Mucosa of descending colon (tissue), 3 donors: ENCODE measurements at regions of chr7 and their contacts with region 1.

Region 1: DNA sequence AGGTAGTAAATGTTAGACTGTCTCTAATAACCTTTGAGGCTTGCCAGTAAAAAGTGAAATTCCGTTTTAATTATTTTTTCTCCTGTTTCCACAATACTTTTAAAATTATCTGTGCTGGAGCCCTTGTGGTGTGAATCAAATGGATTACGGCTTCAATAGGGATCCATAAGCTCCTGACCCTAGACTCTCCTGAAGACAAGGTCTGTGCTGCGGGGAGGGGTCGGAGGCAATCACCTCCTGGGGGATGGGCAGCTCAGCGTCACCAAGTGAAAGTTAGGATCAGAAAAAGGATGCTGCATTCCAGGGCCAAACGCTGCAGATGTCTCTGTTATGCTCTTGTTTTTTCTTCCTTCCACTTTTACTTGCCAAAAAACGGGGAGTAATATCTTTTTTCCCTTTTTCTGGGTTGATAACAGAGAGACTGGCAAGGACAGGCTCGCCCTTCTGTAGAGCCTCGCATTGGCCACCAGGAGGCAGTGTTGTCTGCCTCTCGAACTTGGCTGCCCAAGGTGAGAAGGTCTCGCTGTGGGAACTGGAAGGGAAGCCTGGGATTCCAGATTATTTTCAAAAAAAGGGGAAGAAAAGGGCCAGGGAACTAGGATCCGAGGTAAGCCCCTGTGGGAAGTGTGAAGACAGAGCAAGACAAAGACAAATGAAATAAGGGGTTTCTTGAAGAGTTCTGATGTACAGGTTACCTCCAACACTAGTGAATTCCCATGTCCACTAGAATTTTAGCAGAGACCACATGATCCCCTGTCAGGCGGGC is 621.9 kb downstream of the ACTR3B start:
- DNase-seq: peak in 2 of 3 donors; percentile 12 to 40
- ATAC-seq: peak; percentile 40
- H3K4me3 ChIP-seq: no peak overlapping the region
- H3K4me1 ChIP-seq: no peaks in the 10 kb centered on the region
- CTCF ChIP-seq: peak; percentile 49

Region 2: DNA sequence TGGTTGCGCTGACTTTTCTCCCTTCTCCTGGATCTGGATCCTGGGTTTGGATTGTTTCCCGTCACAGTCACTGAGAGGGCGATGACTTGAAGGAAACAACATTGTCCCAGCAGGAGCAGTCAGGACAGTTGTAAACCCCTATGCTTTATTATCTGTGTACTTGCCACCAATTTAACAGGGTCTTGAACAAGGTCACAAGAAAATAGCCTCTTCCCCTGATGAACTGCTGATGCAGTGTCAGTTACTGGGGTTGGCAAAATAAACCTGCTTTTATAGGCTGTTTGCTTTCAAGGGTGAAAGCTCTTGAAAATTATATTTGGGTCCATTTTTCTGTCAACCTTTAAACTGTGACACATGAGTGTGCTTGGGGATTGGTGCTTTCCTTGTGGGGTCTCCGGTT is 383.0 kb before region 1 on chr7:
- intact Hi-C with region 1: no loop called
- DNase-seq: no peak
- ATAC-seq: no peak
- H3K4me3 ChIP-seq: no peak overlapping the region
- H3K4me1 ChIP-seq: no peaks in the 10 kb centered on the region
- CTCF ChIP-seq: no peak

Region 3: GRCh38 chr7:153835104-153835503 is 453.6 kb after region 1 on chr7:
- intact Hi-C with region 1: loop called in 1 of 2 experiments (anchors 10 kb)
- DNase-seq: no peak
- ATAC-seq: peak; percentile 49
- H3K4me3 ChIP-seq: no peak overlapping the region
- H3K4me1 ChIP-seq: peaks cover 9% of the 10 kb centered on the region
- CTCF ChIP-seq: no peak